ENCODE measurements at regions of chr10 and their contacts with region 1.

Region 1: GRCh38 chr10:91621483-91622113 is 11.3 kb downstream of the PPP1R3C start:
- DNase-seq: no peak
- ATAC-seq: peak in 7 of 8 donors; percentile 36 to 89 (median 72)
- H3K4me3 ChIP-seq: no peak overlapping the region
- H3K27ac ChIP-seq: peak overlapping the region; percentile 2 to 59 (median 40)
- H3K4me1 ChIP-seq: peaks cover 0 to 18% (median 0%) of the 10 kb centered on the region in 9 donors
- H3K27me3 ChIP-seq: no peaks in the 10 kb centered on the region
- CTCF ChIP-seq: no peak

Region 2: GRCh38 chr10:91220194-91220953 is 401.2 kb before region 1 on chr10 and contains the start of gene PCGF5:
- intact Hi-C with region 1: no loop called
- DNase-seq: peak; percentile 88 to 94
- ATAC-seq: peak; percentile 98 to 100 (median 99)
- H3K4me3 ChIP-seq: peak within 1 kb of the TSS; percentile 52 to 98 (median 94)
- H3K27ac ChIP-seq: peak within 1 kb of the TSS; percentile 53 to 97 (median 92)
- H3K4me1 ChIP-seq: peaks cover 0 to 59% (median 47%) of the 10 kb centered on the region in 9 donors
- H3K27me3 ChIP-seq: no peaks in the 10 kb centered on the region
- CTCF ChIP-seq: peak; percentile 4 to 56 (median 41)
- total RNA-seq, gene PCGF5: 65.4 to 104 (median 79.5) TPM

Region 3: GRCh38 chr10:91556691-91557566 is 64.7 kb before region 1 on chr10:
- intact Hi-C with region 1: loop called in 1 of 10 experiments (anchors 5 kb)
- DNase-seq: no peak
- ATAC-seq: no peak
- H3K4me3 ChIP-seq: no peak overlapping the region
- H3K27ac ChIP-seq: peak overlapping the region in 5 of 10 donors; percentile 9 to 37 (median 16)
- H3K4me1 ChIP-seq: peaks cover 0 to 38% (median 11%) of the 10 kb centered on the region in 9 donors
- H3K27me3 ChIP-seq: no peaks in the 10 kb centered on the region
- CTCF ChIP-seq: no peak

Region 4: DNA sequence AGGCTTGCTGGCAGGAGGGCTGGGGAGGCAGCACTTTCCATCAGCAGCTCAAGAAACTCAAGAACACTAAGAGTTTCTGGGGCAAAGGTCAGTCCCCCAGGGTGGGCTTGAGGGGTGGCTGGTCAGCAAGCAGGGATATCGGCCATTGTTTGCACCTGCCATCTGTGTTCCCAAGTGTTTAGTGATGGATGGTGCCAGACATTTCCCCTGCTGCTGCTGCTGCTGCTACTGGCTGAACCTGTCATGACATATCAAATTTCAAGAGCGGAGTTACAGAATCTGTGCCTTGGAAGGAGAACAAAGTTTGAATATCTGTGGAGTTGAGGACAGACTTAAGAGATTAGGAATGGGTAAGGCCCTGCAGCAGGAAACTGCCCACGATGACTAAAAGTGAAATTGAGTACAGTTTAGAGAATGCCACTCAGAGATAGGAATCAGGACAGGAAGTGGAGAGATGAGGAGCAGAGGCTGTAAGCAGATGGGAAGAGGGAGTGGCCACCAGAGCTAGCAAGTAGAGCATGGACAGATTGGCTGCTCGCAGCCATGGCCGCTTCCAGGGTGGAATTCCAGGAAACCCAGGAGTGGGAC is 50.5 kb after region 1 on chr10:
- intact Hi-C with region 1: no loop called
- DNase-seq: no peak
- ATAC-seq: no peak
- H3K4me3 ChIP-seq: no peak overlapping the region
- H3K27ac ChIP-seq: no peak overlapping the region
- H3K4me1 ChIP-seq: peaks cover 0 to 5% (median 0%) of the 10 kb centered on the region in 9 donors
- H3K27me3 ChIP-seq: peaks cover 0 to 2% (median 0%) of the 10 kb centered on the region in 7 donors
- CTCF ChIP-seq: no peak

Region 5: GRCh38 chr10:91683975-91684374 is 62.4 kb after region 1 on chr10:
- intact Hi-C with region 1: no loop called
- DNase-seq: no peak
- ATAC-seq: no peak
- H3K4me3 ChIP-seq: no peak overlapping the region
- H3K27ac ChIP-seq: no peak overlapping the region
- H3K4me1 ChIP-seq: peaks cover 0 to 14% (median 0%) of the 10 kb centered on the region in 9 donors
- H3K27me3 ChIP-seq: no peaks in the 10 kb centered on the region
- CTCF ChIP-seq: no peak

Measured in heart right ventricle (tissue), 16 donors.